Activated CD4-positive, alpha-beta T cell treated with anti-CD3 and anti-CD28 coated beads, Interleukin-2, amount 10 ng/mL, durations not matched to agents 24 days and 14 days (primary cell): ENCODE measurements at regions of chr20 and their contacts with region 1.

Region 1: DNA sequence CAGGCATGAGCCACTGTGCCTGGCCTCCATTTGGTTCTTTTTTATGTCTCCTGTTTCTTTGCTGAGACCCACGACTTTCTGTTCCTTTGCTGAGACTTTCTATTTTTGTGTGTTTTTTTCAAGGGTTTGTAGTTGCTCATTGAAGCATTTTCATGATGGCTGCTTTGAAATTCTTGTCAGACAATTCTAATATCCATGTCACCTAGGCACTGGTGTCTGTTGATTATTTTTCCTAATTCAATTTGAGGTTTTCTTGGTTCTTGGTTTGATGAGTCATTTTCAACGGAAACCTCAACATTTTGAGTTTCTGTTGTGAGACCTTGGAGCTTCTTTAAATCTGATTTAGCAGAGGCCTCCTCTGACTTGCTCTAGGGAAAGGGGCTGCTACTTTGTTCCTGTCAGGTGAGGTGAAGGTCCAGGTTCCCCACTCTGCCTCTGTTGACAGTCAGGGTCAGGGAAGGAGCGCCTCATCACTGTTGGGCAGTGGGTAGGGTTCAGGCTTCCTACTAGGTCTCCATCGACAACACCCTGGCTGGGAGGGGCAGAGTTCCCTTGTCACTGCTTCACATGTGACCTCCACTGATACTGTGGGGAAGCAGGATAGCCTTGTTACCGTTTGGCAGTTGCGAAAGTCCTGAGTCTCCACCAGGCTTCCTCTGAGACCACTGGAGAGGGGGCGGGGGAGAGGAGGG is 67.2 kb upstream of the RNF24 start:
- DNase-seq: peak; percentile 90
- H3K4me3 Mint-ChIP-seq: peak overlapping the region; percentile 60
- H3K27ac Mint-ChIP-seq: peak overlapping the region; percentile 91
- H3K4me1 Mint-ChIP-seq: peaks cover 43% of the 10 kb centered on the region
- H3K27me3 Mint-ChIP-seq: no peaks in the 10 kb centered on the region

Region 2: GRCh38 chr20:3679749-3680700 is 402.5 kb before region 1 on chr20:
- intact Hi-C with region 1: loop called (anchors 10 kb)
- DNase-seq: no peak
- H3K4me3 Mint-ChIP-seq: no peak overlapping the region
- H3K27ac Mint-ChIP-seq: no peak overlapping the region
- H3K4me1 Mint-ChIP-seq: peaks cover 2% of the 10 kb centered on the region
- H3K27me3 Mint-ChIP-seq: peaks cover 59% of the 10 kb centered on the region

Region 3: GRCh38 chr20:3888622-3889488 is 193.7 kb before region 1 on chr20 and contains the start of gene PANK2:
- intact Hi-C with region 1: loop called (anchors 2 kb)
- DNase-seq: peak; percentile 100
- H3K4me3 Mint-ChIP-seq: peak within 1 kb of the TSS; percentile 100
- H3K27ac Mint-ChIP-seq: peak within 1 kb of the TSS; percentile 99
- H3K4me1 Mint-ChIP-seq: peaks cover 45% of the 10 kb centered on the region
- H3K27me3 Mint-ChIP-seq: no peaks in the 10 kb centered on the region
- total RNA-seq, gene PANK2: 45.4 and 52.2 TPM in 2 replicates

Region 4: DNA sequence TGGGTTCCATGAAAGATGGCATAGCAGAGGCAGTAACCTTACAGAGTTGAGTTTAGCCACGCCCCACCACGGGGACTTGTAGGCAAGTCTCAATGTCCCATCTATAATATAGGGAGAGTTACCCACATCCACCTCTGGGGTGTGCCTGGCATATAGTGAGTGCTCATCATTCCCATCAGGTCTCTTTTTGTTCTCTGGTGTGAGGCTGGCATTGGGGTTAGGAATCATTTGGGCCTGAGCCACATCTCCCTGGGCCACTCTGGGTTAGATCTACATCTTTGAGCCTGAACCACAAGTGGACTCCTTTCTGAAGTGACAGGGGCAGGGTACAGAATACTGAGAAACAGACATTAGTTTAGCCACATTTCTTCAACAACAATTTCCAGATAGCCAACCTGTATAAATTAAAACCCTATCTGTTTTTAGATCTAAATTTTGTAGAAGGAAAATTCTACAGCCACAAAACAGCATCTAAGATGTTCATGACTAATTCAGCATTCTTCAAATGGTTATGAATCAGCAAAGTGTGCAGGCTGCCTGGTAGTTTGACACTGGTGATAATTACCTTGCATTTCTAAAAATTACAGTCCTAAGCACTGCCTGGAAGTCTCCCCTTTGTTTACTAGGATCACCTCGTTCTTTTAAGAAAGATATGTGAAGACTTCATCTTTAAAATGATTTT is 87.3 kb before region 1 on chr20:
- intact Hi-C with region 1: loop called (anchors 5 kb)
- DNase-seq: peak; percentile 67
- H3K4me3 Mint-ChIP-seq: peak overlapping the region; percentile 41
- H3K27ac Mint-ChIP-seq: peak overlapping the region; percentile 76
- H3K4me1 Mint-ChIP-seq: peaks cover 37% of the 10 kb centered on the region
- H3K27me3 Mint-ChIP-seq: no peaks in the 10 kb centered on the region

Region 5: GRCh38 chr20:4038047-4038459 is 44.5 kb before region 1 on chr20:
- intact Hi-C with region 1: loop called (anchors 5 kb)
- DNase-seq: peak; percentile 96
- H3K4me3 Mint-ChIP-seq: peak overlapping the region; percentile 83
- H3K27ac Mint-ChIP-seq: peak overlapping the region; percentile 99
- H3K4me1 Mint-ChIP-seq: peaks cover 30% of the 10 kb centered on the region
- H3K27me3 Mint-ChIP-seq: no peaks in the 10 kb centered on the region

Region 6: GRCh38 chr20:4592316-4593148 is 510.0 kb after region 1 on chr20:
- intact Hi-C with region 1: no loop called
- DNase-seq: peak; percentile 88
- H3K4me3 Mint-ChIP-seq: peak overlapping the region; percentile 67
- H3K27ac Mint-ChIP-seq: no peak overlapping the region
- H3K4me1 Mint-ChIP-seq: peaks cover 4% of the 10 kb centered on the region
- H3K27me3 Mint-ChIP-seq: peaks cover 34% of the 10 kb centered on the region